SK-N-SH (cell line): ENCODE measurements at regions of chr3 and their contacts with region 1.

Region 1: GRCh38 chr3:134600685-134601463 is 49.9 kb downstream of the KY start:
- DNase-seq: peak; percentile 83
- H3K4me3 ChIP-seq: peak overlapping the region; percentile 31 to 58
- H3K27ac ChIP-seq: peak overlapping the region in 1 of 2 experiments; percentile 85; a peak in 1 of 4 replicates
- H3K4me1 ChIP-seq: peaks cover 0 to 21% of the 10 kb centered on the region in 2 experiments; a peak in 3 of 4 replicates
- H3K27me3 ChIP-seq: no peaks in the 10 kb centered on the region
- CTCF ChIP-seq: peak; percentile 99
- EP300 ChIP-seq: no peak
- RAD21 ChIP-seq: peak; percentile 97

Region 2: DNA sequence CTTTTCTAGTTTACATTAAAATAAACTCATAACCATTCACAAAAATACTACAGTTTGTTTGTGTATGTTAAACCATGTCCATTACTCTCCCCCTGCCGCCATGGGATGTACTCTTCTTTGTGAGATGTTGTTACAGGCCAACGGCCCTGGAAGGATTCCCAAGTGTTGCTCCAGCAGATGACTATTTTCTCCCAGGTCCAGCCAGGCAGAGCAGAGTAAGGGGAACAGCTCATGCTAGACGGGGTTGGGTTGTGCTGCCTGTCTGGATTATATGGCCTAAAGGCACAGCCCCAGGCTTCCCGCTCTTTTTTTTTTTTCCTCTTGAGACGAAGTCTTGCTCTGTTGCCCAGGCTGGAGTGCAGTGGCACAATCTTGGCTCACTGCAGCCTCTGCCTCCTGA is 546.6 kb before region 1 on chr3:
- CTCF ChIA-PET with region 1: no interaction called
- POLR2A ChIA-PET with region 1: no interaction called
- DNase-seq: no peak
- H3K4me3 ChIP-seq: no peak overlapping the region
- H3K27ac ChIP-seq: no peak overlapping the region
- H3K4me1 ChIP-seq: peaks cover 3 to 5% of the 10 kb centered on the region in 2 experiments; a peak in 2 of 4 replicates
- H3K27me3 ChIP-seq: no peaks in the 10 kb centered on the region
- CTCF ChIP-seq: no peak
- EP300 ChIP-seq: no peak
- RAD21 ChIP-seq: no peak

Region 3: GRCh38 chr3:134394380-134394779 is 206.5 kb before region 1 on chr3:
- CTCF ChIA-PET with region 1: no interaction called
- POLR2A ChIA-PET with region 1: no interaction called
- DNase-seq: no peak
- H3K4me3 ChIP-seq: no peak overlapping the region
- H3K27ac ChIP-seq: no peak overlapping the region
- H3K4me1 ChIP-seq: peaks cover 0 to 3% of the 10 kb centered on the region in 2 experiments; a peak in 1 of 4 replicates
- H3K27me3 ChIP-seq: no peaks in the 10 kb centered on the region
- CTCF ChIP-seq: no peak
- EP300 ChIP-seq: no peak
- RAD21 ChIP-seq: no peak

Region 4: DNA sequence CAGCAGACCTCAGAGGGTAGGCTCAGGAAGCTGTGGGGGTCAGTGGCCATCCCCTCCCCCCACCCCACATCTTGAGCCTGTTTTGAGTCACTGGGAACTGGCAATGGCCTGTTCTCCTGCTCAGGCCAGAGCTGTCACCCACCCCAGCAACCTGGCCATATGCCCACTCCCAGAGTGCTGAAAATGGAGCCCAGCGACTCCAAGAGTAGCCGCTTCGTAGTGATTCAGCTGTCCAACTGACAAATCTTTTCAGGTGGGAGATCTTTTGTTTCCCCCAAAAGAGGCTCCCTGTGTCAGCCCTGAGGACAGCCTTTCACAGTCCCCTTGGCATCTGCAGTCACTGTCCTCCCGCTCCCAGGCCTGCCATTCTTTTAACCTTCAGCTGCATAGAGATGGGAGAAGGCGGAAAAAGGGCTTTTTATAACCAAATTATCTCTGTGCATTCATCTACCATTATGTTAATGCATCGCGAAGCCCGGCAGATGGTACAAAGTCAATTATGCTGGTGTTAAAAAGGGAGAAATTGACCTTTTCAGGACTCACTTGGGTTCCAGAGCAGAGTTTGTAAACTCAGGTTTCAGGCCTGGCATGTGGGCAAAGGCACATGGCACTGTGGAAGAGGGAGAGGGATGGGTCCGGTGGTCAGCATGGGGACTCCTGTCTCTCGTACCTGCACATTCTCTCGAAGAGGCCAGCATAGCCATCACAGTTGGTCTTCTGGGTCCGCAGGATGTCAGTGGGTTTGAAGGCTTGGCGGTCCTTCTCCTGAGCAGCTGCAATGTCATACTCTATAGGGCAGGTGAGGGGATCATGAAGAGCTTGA is 17.8 kb after region 1 on chr3:
- CTCF ChIA-PET with region 1: interaction called, 55 read pairs
- POLR2A ChIA-PET with region 1: no interaction called
- DNase-seq: peak; percentile 47
- H3K4me3 ChIP-seq: no peak overlapping the region
- H3K27ac ChIP-seq: peak overlapping the region in 1 of 2 experiments; percentile 66; a peak in 2 of 4 replicates
- H3K4me1 ChIP-seq: peaks cover 0 to 22% of the 10 kb centered on the region in 2 experiments; a peak in 1 of 4 replicates
- H3K27me3 ChIP-seq: no peaks in the 10 kb centered on the region
- CTCF ChIP-seq: no peak
- EP300 ChIP-seq: no peak
- RAD21 ChIP-seq: no peak

Region 5: DNA sequence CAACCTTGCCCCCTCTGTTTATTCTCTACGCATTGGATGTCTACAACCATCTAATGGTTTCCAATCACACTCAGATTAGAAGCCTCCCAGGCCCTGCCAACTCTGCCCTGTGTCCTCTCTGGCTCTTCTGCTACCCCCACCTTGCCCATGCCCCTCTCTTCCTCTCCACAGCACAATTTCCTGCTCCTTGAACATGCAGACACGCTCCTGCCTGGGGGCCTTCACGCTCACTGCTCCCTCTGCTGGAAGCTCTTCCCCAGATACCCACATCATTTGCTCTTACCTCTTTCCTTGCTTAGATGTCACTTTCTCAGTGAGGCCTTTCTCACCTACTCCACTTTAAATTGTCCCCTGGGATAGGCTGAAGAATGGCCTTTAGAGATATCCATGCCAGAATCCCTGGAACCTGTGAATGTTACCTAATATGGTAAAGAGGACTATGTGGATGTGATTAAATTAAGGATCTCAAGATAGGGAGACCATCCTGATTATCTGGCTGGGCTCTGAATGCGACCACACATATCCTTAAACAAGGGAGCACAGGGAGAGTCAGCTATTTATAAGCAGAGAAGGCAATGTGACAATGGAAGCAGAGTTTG is 40.1 kb after region 1 on chr3:
- CTCF ChIA-PET with region 1: interaction called, 76 read pairs
- POLR2A ChIA-PET with region 1: interaction called, 5 read pairs
- DNase-seq: peak; percentile 64
- H3K4me3 ChIP-seq: no peak overlapping the region; a peak in 1 of 4 replicates
- H3K27ac ChIP-seq: peak overlapping the region in 1 of 2 experiments; percentile 29; a peak in 2 of 4 replicates
- H3K4me1 ChIP-seq: peaks cover 0 to 49% of the 10 kb centered on the region in 2 experiments; a peak in 1 of 4 replicates
- H3K27me3 ChIP-seq: no peaks in the 10 kb centered on the region
- CTCF ChIP-seq: peak; percentile 51
- EP300 ChIP-seq: no peak
- RAD21 ChIP-seq: peak; percentile 36; the same call in 1 of the 2 replicates

Region 6: GRCh38 chr3:134659391-134660045 is 58.6 kb after region 1 on chr3:
- CTCF ChIA-PET with region 1: interaction called, 11 read pairs
- POLR2A ChIA-PET with region 1: no interaction called
- DNase-seq: no peak
- H3K4me3 ChIP-seq: no peak overlapping the region
- H3K27ac ChIP-seq: no peak overlapping the region
- H3K4me1 ChIP-seq: peaks cover 3 to 9% of the 10 kb centered on the region in 2 experiments; a peak in 2 of 4 replicates
- H3K27me3 ChIP-seq: no peaks in the 10 kb centered on the region
- CTCF ChIP-seq: no peak
- EP300 ChIP-seq: no peak
- RAD21 ChIP-seq: no peak

Region 7: DNA sequence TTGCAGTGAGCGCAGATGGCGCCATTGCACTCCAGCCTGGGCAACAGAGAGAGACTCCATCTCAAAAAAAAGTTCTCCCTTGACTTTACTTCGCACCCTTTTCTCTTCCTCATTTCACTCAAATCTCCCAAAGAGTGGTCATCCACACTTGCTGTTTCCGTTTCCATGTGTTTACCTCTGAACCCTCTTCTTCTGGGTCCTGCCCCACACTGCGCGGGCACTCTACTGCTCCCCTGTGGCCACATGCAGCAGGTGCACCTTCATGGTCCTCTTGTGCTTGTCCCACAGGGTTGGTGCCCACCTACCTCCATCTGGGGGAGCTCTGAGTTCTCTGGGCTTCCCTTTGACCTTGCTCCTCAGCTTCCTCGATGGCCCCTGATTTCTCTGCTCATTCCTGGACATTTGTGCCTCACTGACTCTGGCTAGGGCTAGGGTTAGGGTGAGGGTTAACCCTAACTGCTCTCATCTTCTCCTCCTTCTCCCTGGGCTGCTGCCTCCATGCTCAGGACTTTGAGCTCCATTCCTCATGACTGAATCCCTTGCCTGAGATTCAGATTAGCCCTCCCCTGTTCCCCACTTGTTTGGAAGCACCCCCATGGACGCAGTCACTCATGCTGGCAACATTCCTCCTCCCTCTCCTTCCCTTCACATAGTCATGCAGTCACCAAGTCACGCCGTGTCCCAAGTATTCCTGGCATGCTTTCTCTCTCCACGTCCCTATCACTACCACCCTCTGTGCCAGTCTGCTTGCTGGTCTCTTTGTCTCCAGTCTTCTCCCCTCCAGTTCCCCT is 76.5 kb after region 1 on chr3:
- CTCF ChIA-PET with region 1: interaction called, 12 read pairs
- POLR2A ChIA-PET with region 1: no interaction called
- DNase-seq: peak; percentile 35
- H3K4me3 ChIP-seq: no peak overlapping the region
- H3K27ac ChIP-seq: no peak overlapping the region
- H3K4me1 ChIP-seq: no peaks in the 10 kb centered on the region
- H3K27me3 ChIP-seq: no peaks in the 10 kb centered on the region
- CTCF ChIP-seq: peak; percentile 40; the same call in 1 of the 2 replicates
- EP300 ChIP-seq: no peak
- RAD21 ChIP-seq: peak; percentile 38; the same call in 1 of the 2 replicates

Region 8: GRCh38 chr3:134794950-134795745 is 194.3 kb after region 1 on chr3 and contains the start of gene EPHB1:
- CTCF ChIA-PET with region 1: interaction called, 82 read pairs
- POLR2A ChIA-PET with region 1: no interaction called
- DNase-seq: peak; percentile 87
- H3K4me3 ChIP-seq: peak within 1 kb of the TSS; percentile 52 to 83
- H3K27ac ChIP-seq: no peak within 1 kb of the TSS
- H3K4me1 ChIP-seq: peaks cover 0 to 8% of the 10 kb centered on the region in 2 experiments; a peak in 1 of 4 replicates
- H3K27me3 ChIP-seq: no peaks in the 10 kb centered on the region; the same call in 1 of the 2 replicates
- CTCF ChIP-seq: peak; percentile 96
- EP300 ChIP-seq: no peak
- RAD21 ChIP-seq: peak; percentile 89
- polyA plus RNA-seq, gene EPHB1: 0.84 and 1.2 TPM in 2 replicates